Activated naive CD4-positive, alpha-beta T cell treated with anti-CD3 and anti-CD28 coated beads for 36 hours (primary cell): ENCODE measurements at regions of chr1 and their contacts with region 1.

Region 1: DNA sequence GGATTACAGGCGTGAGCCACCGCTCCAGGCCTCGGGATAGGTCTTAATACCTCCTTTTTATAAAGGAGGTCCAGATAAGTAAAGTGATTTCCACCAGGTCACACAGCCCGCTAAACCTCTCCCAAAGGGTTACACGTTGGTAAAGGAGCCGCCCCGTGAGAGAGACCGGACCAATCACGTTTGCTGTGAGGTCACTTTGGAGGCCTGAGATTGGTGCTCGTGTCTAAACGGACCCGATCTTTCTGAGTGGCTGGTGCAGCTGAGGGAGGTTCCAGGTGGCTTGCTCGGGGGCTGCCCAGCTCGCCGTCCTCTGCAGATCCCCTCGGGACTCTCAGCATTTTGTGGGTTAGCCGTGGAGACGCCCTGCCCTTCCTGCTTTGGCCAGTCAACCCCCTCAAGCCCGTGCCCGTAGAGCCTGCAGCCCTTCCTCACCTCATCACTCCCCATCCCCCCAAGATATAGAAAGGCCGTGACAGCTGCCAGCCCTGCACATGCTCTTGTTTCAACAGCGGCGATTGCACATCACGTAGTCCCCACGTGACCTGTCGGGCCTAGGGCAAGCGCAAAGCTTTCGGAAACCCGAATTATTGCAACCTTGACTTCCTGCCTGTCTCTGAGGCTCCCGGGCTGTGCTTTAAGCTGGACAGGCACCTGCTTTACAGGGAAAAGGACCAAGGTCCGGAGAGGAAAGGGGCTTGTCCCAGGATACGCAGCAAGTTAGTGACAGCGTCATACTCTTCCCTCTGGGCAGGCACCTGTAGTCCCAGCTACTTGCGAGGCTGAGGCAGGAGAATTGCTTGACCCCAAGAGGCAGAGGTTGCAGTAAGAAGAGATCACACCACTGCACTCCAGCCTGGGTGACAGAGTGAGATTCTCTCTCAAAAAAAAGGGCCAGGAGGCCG is 5.0 kb upstream of the COA7 start:
- DNase-seq: peak; percentile 89
- H3K4me3 Mint-ChIP-seq: peak overlapping the region; percentile 83
- H3K27ac Mint-ChIP-seq: peak overlapping the region; percentile 87
- H3K4me1 Mint-ChIP-seq: peaks cover 20% of the 10 kb centered on the region
- H3K27me3 Mint-ChIP-seq: no peaks in the 10 kb centered on the region

Region 2: DNA sequence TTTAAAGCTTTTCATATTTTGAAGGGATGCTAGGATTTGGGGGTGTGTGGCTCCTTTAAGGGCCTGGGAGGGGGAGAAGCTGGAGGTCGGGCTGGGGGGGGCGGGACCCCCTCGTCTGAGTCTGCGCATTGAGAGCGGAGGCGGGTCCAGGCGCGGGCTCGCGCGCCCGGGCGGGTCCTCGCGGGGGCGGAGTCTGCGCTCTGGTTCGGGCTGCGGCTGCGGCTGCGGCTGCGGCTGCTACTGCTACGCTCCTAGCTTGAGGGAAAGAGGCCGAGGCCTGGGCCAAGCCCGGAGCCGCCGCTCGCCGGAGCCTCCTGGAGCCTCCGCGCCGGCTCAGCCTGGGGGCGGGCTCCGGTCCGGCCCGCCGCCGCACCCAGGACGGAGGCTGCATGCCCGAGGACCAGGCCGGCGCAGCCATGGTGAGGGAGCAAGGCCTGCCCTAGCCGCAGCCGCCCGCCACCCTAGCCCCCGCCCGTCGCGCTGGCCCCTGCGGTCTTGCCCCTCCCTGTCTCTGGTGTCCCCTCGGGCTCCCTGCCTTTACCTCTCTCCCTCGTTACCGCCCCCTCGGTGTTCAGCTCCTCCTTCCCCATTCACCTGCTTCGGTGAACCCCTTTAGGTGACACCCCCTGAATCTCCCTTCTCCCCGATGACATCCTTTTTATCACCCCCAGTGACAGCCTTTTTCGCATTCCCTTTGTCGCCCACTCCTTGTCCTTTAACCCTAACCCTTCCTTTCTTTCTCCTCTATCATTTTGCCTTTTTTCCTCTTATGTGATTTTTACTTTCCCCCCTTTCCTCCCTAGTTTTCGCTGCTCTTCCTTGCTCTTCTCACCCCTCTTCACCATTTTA is 23.4 kb after region 1 on chr1 and contains the start of gene ZYG11B:
- CTCF ChIA-PET with region 1: interaction called, 4 read pairs
- intact Hi-C with region 1: loop called (anchors 1 kb)
- DNase-seq: peak; percentile 91
- H3K4me3 Mint-ChIP-seq: peak within 1 kb of the TSS; percentile 85
- H3K27ac Mint-ChIP-seq: peak within 1 kb of the TSS; percentile 55
- H3K4me1 Mint-ChIP-seq: peaks cover 33% of the 10 kb centered on the region
- H3K27me3 Mint-ChIP-seq: no peaks in the 10 kb centered on the region
- total RNA-seq, gene ZYG11B: 10.7 to 11.6 TPM

Region 3: DNA sequence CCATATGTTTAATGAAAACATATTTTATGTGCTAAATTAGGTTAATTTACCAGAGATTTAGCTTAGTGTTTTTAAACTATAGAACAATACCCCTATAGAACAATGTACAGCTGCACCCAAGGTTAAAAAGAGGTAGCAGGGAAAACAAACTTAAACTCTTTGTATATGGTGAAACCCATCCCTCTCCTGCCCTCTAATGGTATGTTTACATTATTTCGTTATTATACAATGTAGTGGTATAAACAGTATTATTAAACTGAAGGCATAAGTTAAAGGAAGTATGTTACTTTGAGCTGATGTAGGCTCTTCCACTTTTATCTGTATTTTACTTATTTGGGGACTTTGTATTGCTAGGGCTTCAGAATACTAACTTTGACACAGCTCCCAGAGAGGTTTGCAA is 122.7 kb after region 1 on chr1:
- CTCF ChIA-PET with region 1: interaction called, 3 read pairs
- intact Hi-C with region 1: loop called (anchors 2 kb)
- DNase-seq: no peak
- H3K4me3 Mint-ChIP-seq: no peak overlapping the region
- H3K27ac Mint-ChIP-seq: no peak overlapping the region
- H3K4me1 Mint-ChIP-seq: no peaks in the 10 kb centered on the region
- H3K27me3 Mint-ChIP-seq: no peaks in the 10 kb centered on the region

Region 4: GRCh38 chr1:52920791-52921291 is 217.7 kb after region 1 on chr1:
- CTCF ChIA-PET with region 1: interaction called, 3 read pairs
- intact Hi-C with region 1: loop called (anchors 1 kb)
- DNase-seq: no peak
- H3K4me3 Mint-ChIP-seq: peak overlapping the region; percentile 78
- H3K27ac Mint-ChIP-seq: no peak overlapping the region
- H3K4me1 Mint-ChIP-seq: peaks cover 27% of the 10 kb centered on the region
- H3K27me3 Mint-ChIP-seq: no peaks in the 10 kb centered on the region

Region 5: DNA sequence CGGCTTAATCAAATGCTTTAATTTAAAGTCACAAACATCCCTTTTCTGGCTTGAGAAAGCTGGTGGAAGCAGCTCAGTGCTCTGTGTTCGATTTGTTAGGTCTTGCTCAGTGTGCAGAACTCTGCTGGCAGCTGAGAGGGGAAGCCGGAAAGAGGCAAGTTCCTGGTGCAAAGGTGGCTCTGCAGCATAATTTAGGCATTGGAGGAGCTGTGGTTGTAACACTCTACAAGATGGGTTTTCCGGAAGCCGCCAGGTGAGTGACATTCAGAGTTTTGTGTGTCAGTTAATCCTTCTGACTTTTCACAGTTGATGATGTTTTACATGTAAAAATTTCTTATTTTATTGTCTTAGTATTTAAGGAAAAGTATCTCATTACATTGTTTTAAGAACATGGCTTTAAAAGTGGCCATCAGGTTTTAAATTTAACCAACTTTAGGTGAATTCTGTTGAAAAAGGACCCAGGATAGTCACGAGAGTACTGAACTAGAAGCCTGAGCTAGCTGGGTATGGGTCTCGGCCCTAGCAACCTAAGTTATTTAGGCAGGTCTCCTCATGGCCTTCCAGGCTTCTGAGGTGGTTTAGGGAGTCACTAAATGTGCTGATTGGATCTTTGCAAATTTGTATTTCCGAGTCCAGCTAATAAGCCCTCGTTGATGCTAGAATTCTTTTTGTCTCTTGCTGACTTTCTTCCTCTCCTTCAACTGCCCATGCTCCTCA is 311.8 kb after region 1 on chr1:
- CTCF ChIA-PET with region 1: no interaction called
- intact Hi-C with region 1: loop called (anchors 10 kb)
- DNase-seq: peak; percentile 91
- H3K4me3 Mint-ChIP-seq: peak overlapping the region; percentile 78
- H3K27ac Mint-ChIP-seq: peak overlapping the region; percentile 60
- H3K4me1 Mint-ChIP-seq: peaks cover 20% of the 10 kb centered on the region
- H3K27me3 Mint-ChIP-seq: no peaks in the 10 kb centered on the region

Region 6: GRCh38 chr1:53196485-53197270 is 493.5 kb after region 1 on chr1 and contains the start of gene CPT2:
- CTCF ChIA-PET with region 1: no interaction called
- intact Hi-C with region 1: loop called (anchors 5 kb)
- DNase-seq: peak; percentile 94
- H3K4me3 Mint-ChIP-seq: peak within 1 kb of the TSS; percentile 96
- H3K27ac Mint-ChIP-seq: peak within 1 kb of the TSS; percentile 97
- H3K4me1 Mint-ChIP-seq: peaks cover 21% of the 10 kb centered on the region
- H3K27me3 Mint-ChIP-seq: no peaks in the 10 kb centered on the region
- total RNA-seq, gene CPT2: 11.3 to 13.8 TPM